Activated CD8-positive, alpha-beta T cell treated with anti-CD3 and anti-CD28 coated beads, Interleukin-2, amount 10 ng/mL, durations not matched to agents 7 days and 5 days (primary cell): ENCODE measurements at regions of chr2 and their contacts with region 1.

Region 1: GRCh38 chr2:170928824-170929685 is at the start of gene GORASP2:
- DNase-seq: peak; percentile 99
- ATAC-seq: peak; percentile 95
- H3K4me3 Mint-ChIP-seq: peak within 1 kb of the TSS; percentile 99
- H3K27ac Mint-ChIP-seq: peak within 1 kb of the TSS; percentile 97
- H3K4me1 Mint-ChIP-seq: peaks cover 41% of the 10 kb centered on the region
- H3K27me3 Mint-ChIP-seq: no peaks in the 10 kb centered on the region
- total RNA-seq, gene GORASP2: 65.2 to 65.9 TPM

Region 2: GRCh38 chr2:170873035-170873692 is 55.9 kb before region 1 on chr2:
- CTCF ChIA-PET with region 1: interaction called, 15 read pairs
- POLR2A ChIA-PET with region 1: interaction called, 4 read pairs
- DNase-seq: peak; percentile 87
- ATAC-seq: peak; percentile 99
- H3K4me3 Mint-ChIP-seq: peak overlapping the region; percentile 48
- H3K27ac Mint-ChIP-seq: peak overlapping the region; percentile 73
- H3K4me1 Mint-ChIP-seq: peaks cover 15% of the 10 kb centered on the region
- H3K27me3 Mint-ChIP-seq: peaks cover 8% of the 10 kb centered on the region

Region 3: DNA sequence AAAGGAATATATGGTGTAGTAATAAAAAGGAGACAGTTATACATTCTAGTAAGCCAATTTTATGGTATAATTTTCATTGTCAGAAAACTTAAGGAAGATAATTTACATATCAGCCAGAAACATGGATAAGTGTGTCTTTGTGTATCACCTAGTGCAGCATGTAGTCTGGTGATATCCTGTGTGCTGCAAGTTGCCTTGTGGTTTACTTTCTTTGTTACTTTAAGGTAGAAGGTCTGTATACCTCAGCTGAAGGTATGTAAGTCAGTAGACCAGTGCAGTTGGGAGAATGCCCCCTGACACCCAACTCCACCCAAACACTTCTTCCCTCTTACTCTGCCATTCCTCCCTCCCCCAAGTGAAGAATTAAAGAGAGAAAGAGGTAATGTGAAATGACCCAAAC is 11.0 kb after region 1 on chr2:
- CTCF ChIA-PET with region 1: interaction called, 36 read pairs
- POLR2A ChIA-PET with region 1: interaction called, 5 read pairs
- DNase-seq: peak; percentile 14
- ATAC-seq: no peak
- H3K4me3 Mint-ChIP-seq: no peak overlapping the region
- H3K27ac Mint-ChIP-seq: no peak overlapping the region
- H3K4me1 Mint-ChIP-seq: peaks cover 29% of the 10 kb centered on the region
- H3K27me3 Mint-ChIP-seq: no peaks in the 10 kb centered on the region

Region 4: GRCh38 chr2:170973492-170974303 is 44.6 kb after region 1 on chr2:
- CTCF ChIA-PET with region 1: interaction called, 21 read pairs
- POLR2A ChIA-PET with region 1: interaction called, 3 read pairs
- DNase-seq: peak; percentile 85
- ATAC-seq: peak; percentile 97
- H3K4me3 Mint-ChIP-seq: peak overlapping the region; percentile 76
- H3K27ac Mint-ChIP-seq: peak overlapping the region; percentile 79
- H3K4me1 Mint-ChIP-seq: peaks cover 14% of the 10 kb centered on the region
- H3K27me3 Mint-ChIP-seq: peaks cover 2% of the 10 kb centered on the region

Region 5: DNA sequence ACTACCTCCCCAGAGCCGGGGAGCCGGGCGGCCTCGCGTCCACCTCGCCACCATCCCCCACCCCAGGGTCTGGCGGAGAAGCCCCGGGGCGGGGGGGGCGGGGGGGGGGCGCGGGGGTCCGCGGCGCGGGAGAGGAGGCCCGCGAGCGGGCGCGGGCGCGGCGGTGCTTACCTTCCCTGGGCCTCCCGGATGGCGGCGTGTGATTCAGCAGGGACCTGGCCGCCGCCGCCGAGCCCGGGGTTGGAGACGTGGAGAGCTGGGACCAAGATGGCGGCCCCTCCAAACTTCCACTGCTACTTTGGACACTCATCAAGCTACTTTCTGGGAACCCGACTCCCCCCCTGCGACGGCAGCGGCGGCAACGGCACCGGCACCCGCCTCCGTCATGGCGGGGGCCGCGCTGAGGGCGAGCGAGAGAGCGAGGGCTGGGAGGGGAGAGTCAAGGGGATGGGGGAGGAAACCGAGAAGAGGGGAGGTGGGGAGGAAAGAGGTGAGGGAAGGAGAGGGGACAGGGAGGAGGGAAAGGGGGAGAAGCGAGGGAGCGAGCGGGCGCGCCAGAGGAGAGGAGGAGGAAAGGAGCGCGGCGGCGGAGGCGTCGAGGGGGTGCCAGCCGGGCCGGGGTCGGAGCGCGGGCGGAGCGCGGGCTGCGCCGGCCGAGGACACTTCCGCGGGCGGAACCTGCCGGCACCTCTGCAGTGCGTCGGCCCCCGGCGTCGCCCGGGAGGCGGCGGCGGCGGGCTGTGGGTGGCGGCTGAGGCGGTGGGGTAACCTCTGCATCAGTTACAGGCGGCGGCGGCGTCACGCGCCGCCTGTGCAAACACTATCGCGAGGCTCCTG is 231.3 kb after region 1 on chr2 and contains the start of gene TLK1:
- CTCF ChIA-PET with region 1: interaction called, 29 read pairs
- POLR2A ChIA-PET with region 1: interaction called, 3 read pairs
- DNase-seq: peak; percentile 79
- ATAC-seq: peak; percentile 69
- H3K4me3 Mint-ChIP-seq: peak within 1 kb of the TSS; percentile 99
- H3K27ac Mint-ChIP-seq: peak within 1 kb of the TSS; percentile 96
- H3K4me1 Mint-ChIP-seq: peaks cover 57% of the 10 kb centered on the region
- H3K27me3 Mint-ChIP-seq: no peaks in the 10 kb centered on the region
- total RNA-seq, gene TLK1: 89.1 to 96.3 TPM

Region 6: DNA sequence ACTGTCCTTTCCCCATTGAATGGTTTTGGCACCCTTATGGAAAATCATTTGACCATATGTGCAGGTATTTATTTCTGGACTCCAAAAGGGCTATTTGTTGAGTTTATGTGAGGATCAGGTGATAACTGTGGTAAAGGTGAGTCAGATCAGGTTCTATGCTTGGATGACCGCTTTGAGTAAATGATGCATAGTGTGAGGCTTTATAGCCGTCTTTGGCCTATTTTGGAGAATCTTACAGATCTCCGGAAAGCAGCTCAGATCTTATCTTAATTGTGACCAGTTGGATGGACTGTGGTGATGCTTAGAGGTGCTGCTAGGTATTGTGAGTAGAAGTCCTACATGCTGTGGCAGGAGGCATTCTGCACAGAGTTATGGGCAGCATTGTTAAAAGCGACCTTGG is 378.5 kb after region 1 on chr2:
- CTCF ChIA-PET with region 1: no interaction called
- POLR2A ChIA-PET with region 1: no interaction called
- DNase-seq: no peak
- ATAC-seq: no peak
- H3K4me3 Mint-ChIP-seq: no peak overlapping the region
- H3K27ac Mint-ChIP-seq: no peak overlapping the region
- H3K4me1 Mint-ChIP-seq: no peaks in the 10 kb centered on the region
- H3K27me3 Mint-ChIP-seq: no peaks in the 10 kb centered on the region

Region 7: GRCh38 chr2:171433763-171434670 is 505.0 kb after region 1 on chr2 and contains the starts of genes DCAF17 and METTL8:
- CTCF ChIA-PET with region 1: interaction called, 13 read pairs
- POLR2A ChIA-PET with region 1: no interaction called
- DNase-seq: peak; percentile 95
- ATAC-seq: peak; percentile 95
- H3K4me3 Mint-ChIP-seq: peak within 1 kb of the TSS; percentile 92
- H3K27ac Mint-ChIP-seq: peak within 1 kb of the TSS; percentile 94
- H3K4me1 Mint-ChIP-seq: peaks cover 31% of the 10 kb centered on the region
- H3K27me3 Mint-ChIP-seq: no peaks in the 10 kb centered on the region
- total RNA-seq, gene DCAF17: 15.9 to 17.5 TPM
- total RNA-seq, gene METTL8: 20.9 to 22.4 TPM